GM10248 (cell line): ENCODE measurements at regions of chr10 and their contacts with region 1.

Region 1: DNA sequence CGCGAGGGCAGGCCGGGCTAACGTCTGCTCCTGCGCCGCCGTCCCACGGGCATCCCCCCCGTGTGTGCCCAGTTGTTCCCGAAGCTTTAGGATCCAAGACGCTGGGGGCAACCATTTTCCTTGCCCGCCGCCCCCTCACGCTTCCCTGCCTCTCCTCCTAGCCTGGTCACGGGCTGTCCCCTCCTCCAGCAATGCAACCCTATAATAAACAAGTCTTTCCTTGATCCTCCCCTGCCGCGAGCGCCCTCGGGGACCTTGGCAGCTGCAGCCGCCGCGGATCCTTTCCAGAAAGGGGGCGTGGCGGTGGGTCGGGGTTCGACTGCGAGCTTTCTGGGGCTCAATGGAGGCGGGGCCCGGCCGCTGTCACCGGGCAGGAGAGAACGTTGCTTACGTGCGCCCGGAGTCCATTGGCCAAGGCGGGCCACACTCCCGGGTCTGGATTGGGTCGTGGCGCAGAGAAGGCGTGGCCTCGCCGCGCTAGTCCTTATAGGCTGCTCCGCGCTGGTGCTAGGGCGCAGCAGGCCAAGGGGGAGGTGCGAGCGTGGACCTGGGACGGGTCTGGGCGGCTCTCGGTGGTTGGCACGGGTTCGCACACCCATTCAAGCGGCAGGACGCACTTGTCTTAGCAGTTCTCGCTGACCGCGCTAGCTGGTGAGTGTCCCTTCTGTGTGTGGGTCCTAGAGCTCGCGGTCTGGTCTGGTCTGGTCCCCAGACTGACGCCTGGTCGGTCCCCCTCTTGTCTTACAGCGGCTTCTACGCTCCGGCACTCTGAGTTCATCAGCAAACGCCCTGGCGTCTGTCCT is at the start of gene DDIT4:
- DNase-seq: peak; percentile 100
- CTCF ChIP-seq: no peak

Region 2: GRCh38 chr10:72248468-72249151 is 25.0 kb before region 1 on chr10:
- CTCF ChIA-PET with region 1: interaction called, 7 read pairs
- POLR2A ChIA-PET with region 1: interaction called, 12 read pairs
- DNase-seq: peak; percentile 81
- CTCF ChIP-seq: no peak

Region 3: DNA sequence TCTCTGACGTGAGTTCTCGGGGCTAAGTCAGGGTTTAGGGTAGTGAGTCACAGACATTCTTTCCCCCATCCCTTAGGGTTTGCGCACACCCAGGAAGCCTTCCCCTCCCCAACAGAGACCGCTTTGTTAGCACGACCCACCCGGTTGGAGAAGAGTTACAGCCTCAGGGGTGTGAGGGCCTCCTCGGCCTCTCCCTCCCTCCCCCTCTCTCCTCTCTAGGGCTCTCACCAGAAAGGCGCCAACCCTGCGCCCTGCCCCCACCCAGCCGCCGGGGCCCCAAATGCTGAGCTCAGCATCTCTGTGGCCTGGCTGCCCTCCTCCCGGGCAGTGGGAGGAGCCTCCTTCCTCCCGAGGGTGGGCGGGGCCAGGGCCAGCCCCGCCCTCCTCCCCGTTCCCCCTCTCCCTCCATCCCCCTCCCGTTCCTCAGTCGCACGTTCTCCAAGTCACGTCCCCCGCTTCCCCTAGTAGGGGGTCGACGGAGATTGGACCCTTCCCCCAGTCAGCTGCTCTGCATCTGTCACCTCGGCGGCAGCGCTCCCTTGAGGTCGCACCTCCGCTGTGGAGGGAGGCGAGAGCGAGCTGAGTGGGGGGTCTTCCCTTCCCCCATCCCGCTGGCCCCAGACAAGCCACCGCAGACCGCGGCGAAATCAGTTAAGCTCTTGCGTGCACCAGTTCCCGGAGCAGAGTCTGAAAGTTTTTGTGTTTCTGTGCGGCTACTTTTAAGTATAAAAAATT is 12.9 kb before region 1 on chr10:
- CTCF ChIA-PET with region 1: interaction called, 25 read pairs
- POLR2A ChIA-PET with region 1: interaction called, 50 read pairs
- DNase-seq: peak; percentile 89
- CTCF ChIP-seq: peak; percentile 20

Region 4: GRCh38 chr10:72292223-72292691 is 18.6 kb after region 1 on chr10:
- CTCF ChIA-PET with region 1: interaction called, 54 read pairs
- POLR2A ChIA-PET with region 1: interaction called, 86 read pairs
- DNase-seq: no peak
- CTCF ChIP-seq: no peak

Region 5: DNA sequence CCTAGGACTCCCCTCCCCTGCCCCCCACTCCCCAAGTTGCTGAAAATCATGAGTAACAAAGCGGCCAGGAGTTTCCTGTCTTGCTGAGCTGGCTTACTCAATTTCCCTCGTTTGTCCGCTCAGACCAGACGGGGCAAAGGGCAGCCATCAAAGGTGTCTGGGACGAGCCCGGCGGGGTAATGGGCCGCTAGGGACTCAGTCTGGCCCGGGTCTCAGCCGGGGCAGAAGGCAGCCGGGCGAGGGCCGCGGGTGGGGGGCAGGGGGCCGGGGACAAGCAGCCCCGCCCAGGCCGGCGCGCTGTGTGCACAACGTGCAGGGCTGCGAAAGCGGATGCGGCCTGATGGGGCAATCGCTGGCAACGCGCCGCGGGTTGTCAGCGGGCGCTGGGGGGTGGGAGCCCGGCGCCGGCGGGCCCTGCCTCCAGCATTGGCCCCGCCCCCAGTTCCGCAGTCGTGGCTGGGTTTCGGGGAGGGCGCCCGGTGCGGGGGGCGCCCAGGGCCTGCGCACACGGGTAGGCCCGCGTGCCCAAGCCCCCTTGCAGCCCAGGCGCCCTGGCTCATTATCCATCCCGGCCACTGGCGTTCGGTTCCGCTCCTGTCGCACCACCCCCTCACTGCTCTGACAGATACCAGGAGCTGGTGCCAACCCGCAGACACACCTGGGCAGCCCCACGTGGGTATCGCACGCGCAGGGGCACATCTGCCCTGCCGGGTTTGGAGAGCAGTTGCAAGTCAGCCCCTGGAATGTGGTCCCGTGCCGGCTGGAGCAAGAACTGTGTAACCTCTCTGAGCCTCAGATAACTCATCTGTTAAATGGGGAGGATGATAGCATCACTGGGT is 46.0 kb after region 1 on chr10:
- CTCF ChIA-PET with region 1: interaction called, 9 read pairs
- POLR2A ChIA-PET with region 1: interaction called, 11 read pairs
- DNase-seq: peak; percentile 86
- CTCF ChIP-seq: no peak

Region 6: DNA sequence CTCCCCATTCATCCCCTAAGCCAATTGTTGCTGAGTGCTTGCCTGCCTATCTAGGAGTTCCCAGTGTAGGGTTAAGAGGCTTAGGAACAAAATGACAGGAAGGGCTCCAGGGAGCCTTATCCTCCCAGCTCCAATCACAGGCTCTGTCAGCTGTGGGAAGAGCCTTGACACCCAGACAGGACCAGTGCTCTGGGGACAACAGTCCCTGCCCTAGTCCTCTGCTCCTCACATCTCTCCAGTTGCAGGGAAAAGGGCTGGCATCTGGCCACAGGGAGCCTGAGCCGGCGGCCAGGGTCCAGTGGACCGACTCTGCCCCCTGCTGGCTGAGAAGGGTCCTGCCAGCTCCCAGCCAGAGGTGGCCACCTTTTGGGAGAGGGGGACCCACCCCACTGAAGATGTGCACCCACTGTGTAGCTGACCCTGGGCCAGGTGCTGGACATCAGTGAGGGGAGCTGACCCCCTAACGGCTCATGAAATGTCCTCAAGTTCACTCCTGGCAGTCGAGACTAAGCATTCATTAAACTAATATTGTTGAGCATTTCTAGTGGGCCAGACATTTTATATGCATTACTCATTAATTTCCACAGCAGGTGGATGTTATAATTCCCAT is 63.5 kb after region 1 on chr10:
- CTCF ChIA-PET with region 1: interaction called, 17 read pairs
- POLR2A ChIA-PET with region 1: interaction called, 3 read pairs
- DNase-seq: peak; percentile 68
- CTCF ChIP-seq: peak; percentile 96